Activated CD8-positive, alpha-beta T cell treated with anti-CD3 and anti-CD28 coated beads for 36 hours (primary cell): ENCODE measurements at regions of chr4 and their contacts with region 1.

Region 1: DNA sequence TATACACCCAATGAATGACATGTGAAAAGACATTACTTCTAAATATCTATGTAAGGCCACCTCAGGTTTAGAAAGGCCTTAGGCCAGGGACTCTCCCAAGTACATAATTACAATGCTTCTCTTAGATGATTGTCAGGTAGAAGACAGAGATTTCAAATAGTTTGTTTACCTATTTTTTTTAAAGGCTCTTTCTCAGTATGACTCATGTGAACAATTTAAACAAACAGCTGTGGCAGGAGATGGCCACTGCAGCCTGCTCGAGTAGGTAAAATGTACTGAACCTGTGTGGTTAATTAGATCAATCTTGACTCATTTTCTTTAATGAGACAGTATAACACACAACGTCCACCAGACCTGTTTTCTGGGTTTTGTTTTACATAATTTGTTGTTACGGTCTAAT is 50.2 kb downstream of the LEF1 start:
- DNase-seq: peak; percentile 63
- ATAC-seq: peak; percentile 9
- H3K4me3 Mint-ChIP-seq: peak overlapping the region; percentile 28
- H3K27ac Mint-ChIP-seq: peak overlapping the region; percentile 89
- H3K4me1 Mint-ChIP-seq: peaks cover 86% of the 10 kb centered on the region
- H3K27me3 Mint-ChIP-seq: no peaks in the 10 kb centered on the region
- CTCF ChIP-seq: no peak

Region 2: DNA sequence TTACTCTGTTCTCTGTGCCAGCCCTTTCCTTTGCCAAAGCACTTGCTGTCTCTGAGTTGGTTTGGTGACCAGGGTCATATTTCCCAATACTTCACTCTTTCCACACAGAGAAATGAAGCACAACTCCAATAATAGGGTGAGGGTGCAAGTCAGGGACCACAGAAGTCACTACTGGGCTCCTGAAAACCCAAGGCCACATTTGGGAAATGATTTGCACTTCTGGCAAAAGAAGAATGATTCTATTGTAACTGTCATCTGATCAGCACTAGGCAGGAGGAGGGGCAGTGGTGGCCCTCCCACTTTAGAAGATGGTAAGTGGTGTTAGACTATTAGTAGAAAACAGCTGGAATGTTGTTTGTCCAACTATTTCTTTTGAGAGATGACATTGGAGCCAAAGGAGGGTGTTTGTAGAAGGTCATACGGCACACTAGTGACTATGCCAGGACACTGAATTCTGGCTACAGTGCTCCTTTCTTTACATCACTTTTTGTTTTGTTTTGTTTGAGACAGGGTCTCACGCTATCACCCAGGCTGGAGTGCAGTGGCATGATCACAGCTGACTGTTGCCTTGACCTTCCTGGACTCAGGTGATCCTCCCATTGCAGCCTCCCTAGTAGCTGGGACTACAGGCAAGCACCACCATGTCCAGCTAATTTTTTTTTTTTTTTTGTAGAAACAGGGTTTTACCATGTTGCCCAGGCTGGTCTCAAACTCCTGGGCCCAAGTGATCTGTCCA is 139.6 kb before region 1 on chr4:
- CTCF ChIA-PET with region 1: no interaction called
- POLR2A ChIA-PET with region 1: no interaction called
- intact Hi-C with region 1: no loop called
- DNase-seq: no peak
- ATAC-seq: no peak
- H3K4me3 Mint-ChIP-seq: no peak overlapping the region
- H3K27ac Mint-ChIP-seq: no peak overlapping the region
- H3K4me1 Mint-ChIP-seq: peaks cover 5% of the 10 kb centered on the region
- H3K27me3 Mint-ChIP-seq: no peaks in the 10 kb centered on the region
- CTCF ChIP-seq: no peak

Region 3: GRCh38 chr4:108094923-108095482 is 23.5 kb before region 1 on chr4:
- CTCF ChIA-PET with region 1: interaction called, 7 read pairs
- POLR2A ChIA-PET with region 1: interaction called, 12 read pairs
- intact Hi-C with region 1: no loop called
- DNase-seq: no peak
- ATAC-seq: peak; percentile 18
- H3K4me3 Mint-ChIP-seq: no peak overlapping the region
- H3K27ac Mint-ChIP-seq: peak overlapping the region; percentile 70
- H3K4me1 Mint-ChIP-seq: peaks cover 84% of the 10 kb centered on the region
- H3K27me3 Mint-ChIP-seq: no peaks in the 10 kb centered on the region
- CTCF ChIP-seq: peak; percentile 49

Region 4: GRCh38 chr4:108135549-108136209 is 17.2 kb after region 1 on chr4:
- CTCF ChIA-PET with region 1: interaction called, 15 read pairs
- POLR2A ChIA-PET with region 1: interaction called, 12 read pairs
- intact Hi-C with region 1: no loop called
- DNase-seq: peak; percentile 46
- ATAC-seq: peak; percentile 22
- H3K4me3 Mint-ChIP-seq: peak overlapping the region; percentile 65
- H3K27ac Mint-ChIP-seq: peak overlapping the region; percentile 94
- H3K4me1 Mint-ChIP-seq: peaks cover 78% of the 10 kb centered on the region
- H3K27me3 Mint-ChIP-seq: no peaks in the 10 kb centered on the region
- CTCF ChIP-seq: no peak

Region 5: DNA sequence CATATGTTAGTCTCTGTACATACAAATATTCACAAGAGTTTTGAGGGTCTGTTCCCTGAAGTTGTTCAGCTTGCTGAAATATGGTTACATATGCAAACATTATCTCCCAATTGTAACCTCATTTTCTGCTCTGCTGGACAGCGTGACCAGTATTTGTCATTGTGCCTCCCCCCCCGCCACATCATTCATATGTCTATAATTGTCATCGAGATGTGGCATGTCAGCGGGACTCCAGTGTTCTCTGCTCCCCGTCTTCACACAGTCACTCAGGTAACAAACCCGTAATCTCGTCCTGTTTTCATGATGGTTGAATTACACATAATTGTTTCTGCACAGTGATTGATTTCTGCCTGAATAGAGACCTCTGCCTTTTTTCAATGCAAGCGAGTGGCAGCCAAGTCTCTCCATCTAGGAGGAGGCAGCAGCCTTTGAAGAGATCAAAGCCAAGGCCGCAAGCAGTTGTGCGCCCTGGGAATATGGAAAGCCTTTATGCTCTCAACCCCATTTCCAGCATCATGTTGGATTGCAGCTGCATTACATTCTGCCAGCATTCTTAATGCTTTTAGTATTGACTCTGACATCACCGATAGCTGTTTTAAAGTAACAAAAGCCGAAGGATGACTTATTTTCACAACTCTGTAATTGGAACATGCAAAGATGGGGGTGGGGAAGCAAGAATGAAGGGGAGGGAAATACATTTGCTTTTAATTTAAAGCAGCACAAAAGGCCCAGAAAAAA is 22.9 kb after region 1 on chr4:
- CTCF ChIA-PET with region 1: interaction called, 12 read pairs
- POLR2A ChIA-PET with region 1: interaction called, 12 read pairs
- intact Hi-C with region 1: no loop called
- DNase-seq: peak; percentile 69
- ATAC-seq: peak; percentile 37
- H3K4me3 Mint-ChIP-seq: peak overlapping the region; percentile 72
- H3K27ac Mint-ChIP-seq: peak overlapping the region; percentile 96
- H3K4me1 Mint-ChIP-seq: peaks cover 79% of the 10 kb centered on the region
- H3K27me3 Mint-ChIP-seq: no peaks in the 10 kb centered on the region
- CTCF ChIP-seq: no peak

Region 6: DNA sequence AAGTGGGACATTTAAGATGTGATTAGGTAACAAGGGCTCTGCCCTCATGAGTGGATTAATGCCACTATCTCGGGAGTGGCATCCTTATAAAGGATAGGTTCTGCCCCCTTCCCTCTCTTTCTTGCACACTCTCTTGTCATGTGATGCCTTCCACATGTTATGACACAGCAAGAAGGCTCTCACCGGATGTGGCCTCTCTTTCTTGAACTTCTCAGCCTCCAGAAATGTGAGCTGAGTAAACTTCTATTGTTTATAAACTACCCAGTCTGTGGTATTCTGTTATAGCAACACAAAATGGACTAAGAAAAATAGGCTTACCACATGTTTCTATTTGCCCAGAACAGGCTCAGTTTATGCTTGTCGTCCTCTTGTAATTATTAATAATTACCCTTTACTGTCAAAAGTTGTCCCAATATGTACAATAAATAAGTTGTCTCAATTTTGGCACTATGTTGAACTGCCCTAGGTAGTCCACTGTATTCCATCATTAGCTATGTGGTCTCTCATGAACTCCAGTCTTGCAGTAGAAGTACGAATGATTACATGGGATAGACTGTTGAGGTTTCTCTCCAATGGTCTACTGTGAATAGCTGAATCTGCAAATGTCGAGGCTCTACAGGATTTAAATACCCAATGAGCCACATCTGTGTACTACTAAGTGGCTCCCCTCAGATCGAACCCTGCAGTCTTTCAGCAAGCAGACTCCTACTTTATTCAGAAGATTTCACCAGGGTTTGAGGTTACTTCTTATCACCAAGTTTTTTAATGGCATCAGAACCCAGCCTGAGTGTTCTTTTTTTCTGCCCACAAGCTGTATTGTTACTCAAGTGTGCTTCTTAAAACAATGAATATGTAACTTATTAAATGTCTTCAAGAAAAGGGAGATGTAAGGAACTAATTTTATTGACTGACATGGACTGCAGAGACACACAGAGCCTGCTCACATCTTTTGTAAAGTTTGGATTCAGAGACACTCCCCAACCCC is 152.3 kb after region 1 on chr4:
- CTCF ChIA-PET with region 1: no interaction called
- POLR2A ChIA-PET with region 1: no interaction called
- intact Hi-C with region 1: no loop called
- DNase-seq: peak; percentile 8
- ATAC-seq: no peak
- H3K4me3 Mint-ChIP-seq: no peak overlapping the region
- H3K27ac Mint-ChIP-seq: no peak overlapping the region
- H3K4me1 Mint-ChIP-seq: peaks cover 5% of the 10 kb centered on the region
- H3K27me3 Mint-ChIP-seq: no peaks in the 10 kb centered on the region
- CTCF ChIP-seq: no peak